AG04449 (cell line): ENCODE measurements at regions of chrX and their contacts with region 1.

Region 1: GRCh38 chrX:103488794-103489193 is 30.5 kb downstream of the RAB40A start:
- DNase-seq: no peak
- H3K4me3 ChIP-seq: no peak overlapping the region
- CTCF ChIP-seq: no peak

Region 2: DNA sequence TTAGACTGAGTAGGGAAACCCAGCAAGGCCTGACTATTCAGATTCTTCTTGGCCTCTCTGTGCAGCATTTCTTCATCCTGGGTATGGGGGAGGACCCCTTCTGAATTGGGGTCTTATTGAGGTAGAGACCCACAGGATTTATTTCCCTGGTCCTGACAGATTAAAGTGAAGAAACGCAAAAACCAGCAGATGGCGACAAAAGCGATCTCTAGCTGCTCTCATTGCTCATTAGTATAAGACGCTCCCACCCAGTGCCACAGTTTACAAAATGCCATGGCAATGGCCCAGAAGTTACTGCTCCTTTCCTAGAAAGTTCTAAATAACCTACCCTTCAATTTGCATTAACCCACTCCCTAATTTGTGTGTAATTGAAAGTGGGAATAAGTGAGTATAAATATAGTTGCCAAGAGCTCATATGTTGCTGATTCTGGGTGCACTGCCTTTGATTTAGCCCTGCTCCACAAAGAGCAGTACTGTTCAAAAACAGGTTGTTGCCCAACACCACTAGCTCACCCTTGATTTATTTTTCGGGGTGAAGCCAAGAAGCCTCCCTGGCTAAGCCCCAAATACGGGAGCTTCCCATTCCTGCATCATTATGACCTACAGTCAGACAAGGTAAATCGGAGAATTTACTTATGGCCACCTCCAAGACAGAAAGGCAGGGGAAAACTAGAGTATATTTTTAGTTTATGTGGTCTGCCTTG is 277.6 kb before region 1 on chrX:
- CTCF ChIA-PET with region 1: interaction called, 24 read pairs
- POLR2A ChIA-PET with region 1: no interaction called
- DNase-seq: no peak
- H3K4me3 ChIP-seq: no peak overlapping the region
- CTCF ChIP-seq: peak; percentile 16

Region 3: DNA sequence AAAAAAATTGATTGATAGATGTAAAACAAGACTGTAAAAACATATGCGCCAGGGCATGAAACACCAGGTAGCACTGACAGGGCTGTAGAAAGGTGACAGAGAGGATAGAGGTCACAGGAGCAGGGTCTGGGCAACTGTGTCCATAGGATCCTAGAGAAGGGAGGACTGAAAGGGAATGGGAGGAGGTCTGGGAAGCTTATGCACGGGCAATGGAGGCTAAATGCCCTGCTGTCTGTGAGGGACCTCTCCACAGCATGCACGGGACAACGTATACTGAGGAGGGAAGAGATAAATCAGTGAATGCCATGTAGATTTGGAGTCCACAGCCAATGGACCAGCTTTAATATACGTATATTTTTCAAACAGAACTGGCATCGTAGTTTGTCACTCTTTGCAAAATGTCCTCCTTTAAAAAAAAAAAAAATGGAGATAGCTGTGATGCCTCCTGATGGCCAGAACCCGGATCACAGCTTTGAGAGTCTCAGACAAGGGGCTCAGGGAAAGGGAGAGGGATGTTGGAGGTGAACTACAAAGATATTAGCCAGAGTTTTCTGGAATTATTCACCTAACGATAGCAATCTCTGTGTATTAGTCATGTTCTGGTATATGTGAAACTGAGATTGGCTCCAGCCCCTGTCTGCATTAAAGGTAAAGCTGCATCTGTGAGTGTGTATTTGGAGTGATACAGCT is 14.5 kb after region 1 on chrX:
- CTCF ChIA-PET with region 1: interaction called, 25 read pairs
- POLR2A ChIA-PET with region 1: no interaction called
- DNase-seq: no peak
- H3K4me3 ChIP-seq: no peak overlapping the region
- CTCF ChIP-seq: no peak

Region 4: DNA sequence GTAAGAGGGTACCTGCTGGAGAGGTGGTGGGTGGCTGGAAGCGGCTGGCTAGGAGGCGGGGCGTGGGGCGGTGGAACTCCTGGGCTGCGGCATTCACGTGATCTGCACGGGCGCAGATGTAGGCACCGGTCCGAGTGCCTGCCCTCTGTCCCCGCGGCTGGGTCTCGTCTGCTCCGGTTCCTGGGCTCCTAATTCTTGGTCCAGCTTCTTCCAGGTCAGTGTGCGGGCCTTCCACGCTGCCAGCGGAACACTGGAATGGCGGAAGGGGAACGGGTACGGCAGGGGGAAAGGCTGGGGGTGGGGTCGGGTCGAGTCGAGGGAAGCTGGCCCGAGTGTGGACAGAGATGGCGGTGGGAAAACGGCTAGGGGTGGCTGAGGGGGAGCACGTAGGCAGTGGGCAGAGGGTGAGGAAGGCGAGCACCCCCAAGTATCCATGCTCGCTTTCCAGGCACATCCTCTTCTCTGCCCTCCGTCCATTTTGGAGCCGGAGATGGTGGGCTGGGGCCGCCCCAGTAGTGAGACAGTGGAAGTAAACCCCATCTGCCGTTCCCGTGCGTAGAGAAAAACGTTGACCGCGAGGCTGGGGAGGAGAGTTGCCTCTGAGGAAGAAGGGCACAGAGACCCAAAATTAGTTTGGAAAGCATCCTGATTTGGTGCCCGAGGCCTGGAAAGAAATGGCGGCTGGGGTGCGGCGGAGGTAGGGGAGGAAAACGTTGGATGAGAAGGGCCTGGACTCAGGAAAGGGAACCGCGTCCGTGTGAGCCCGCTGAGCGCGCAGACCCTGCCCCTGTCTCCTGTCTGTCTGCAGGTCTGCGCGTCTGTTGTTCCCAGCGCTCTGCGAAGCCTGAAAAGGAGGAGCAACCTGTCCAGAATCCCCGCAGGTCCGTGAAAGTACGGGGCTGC is 96.9 kb after region 1 on chrX and contains the start of gene TCEAL4:
- CTCF ChIA-PET with region 1: no interaction called
- POLR2A ChIA-PET with region 1: no interaction called
- DNase-seq: no peak
- H3K4me3 ChIP-seq: peak within 1 kb of the TSS; percentile 73
- CTCF ChIP-seq: no peak